ENCODE measurements at regions of chr6 and their contacts with region 1.

Region 1: GRCh38 chr6:138588805-138589434 is 89.6 kb upstream of the NHSL1 start:
- DNase-seq: peak; percentile 83
- ATAC-seq: peak; percentile 67
- H3K4me3 ChIP-seq: no peak overlapping the region
- H3K27ac ChIP-seq: no peak overlapping the region
- H3K4me1 ChIP-seq: peaks cover 2% of the 10 kb centered on the region
- H3K27me3 ChIP-seq: no peaks in the 10 kb centered on the region
- CTCF ChIP-seq: peak; percentile 92
- POLR2A ChIP-seq: 0 out of 2 replicates have a peak, but pooled peaks have one; percentile 35
- RAD21 ChIP-seq: peak; percentile 90

Region 2: GRCh38 chr6:138428944-138429598 is 159.8 kb before region 1 on chr6:
- CTCF ChIA-PET with region 1: interaction called, 6 read pairs
- POLR2A ChIA-PET with region 1: no interaction called
- dilution Hi-C with region 1: no loop called
- in situ Hi-C with region 1: loop called (anchors 5 kb)
- intact Hi-C with region 1: loop called (anchors 1 kb)
- DNase-seq: peak; percentile 77
- ATAC-seq: peak; percentile 76
- H3K4me3 ChIP-seq: no peak overlapping the region
- H3K27ac ChIP-seq: no peak overlapping the region
- H3K4me1 ChIP-seq: peaks cover 5% of the 10 kb centered on the region; the same call in 1 of the 2 replicates
- H3K27me3 ChIP-seq: no peaks in the 10 kb centered on the region
- CTCF ChIP-seq: peak; percentile 80
- POLR2A ChIP-seq: no peak
- RAD21 ChIP-seq: peak; percentile 80

Region 3: DNA sequence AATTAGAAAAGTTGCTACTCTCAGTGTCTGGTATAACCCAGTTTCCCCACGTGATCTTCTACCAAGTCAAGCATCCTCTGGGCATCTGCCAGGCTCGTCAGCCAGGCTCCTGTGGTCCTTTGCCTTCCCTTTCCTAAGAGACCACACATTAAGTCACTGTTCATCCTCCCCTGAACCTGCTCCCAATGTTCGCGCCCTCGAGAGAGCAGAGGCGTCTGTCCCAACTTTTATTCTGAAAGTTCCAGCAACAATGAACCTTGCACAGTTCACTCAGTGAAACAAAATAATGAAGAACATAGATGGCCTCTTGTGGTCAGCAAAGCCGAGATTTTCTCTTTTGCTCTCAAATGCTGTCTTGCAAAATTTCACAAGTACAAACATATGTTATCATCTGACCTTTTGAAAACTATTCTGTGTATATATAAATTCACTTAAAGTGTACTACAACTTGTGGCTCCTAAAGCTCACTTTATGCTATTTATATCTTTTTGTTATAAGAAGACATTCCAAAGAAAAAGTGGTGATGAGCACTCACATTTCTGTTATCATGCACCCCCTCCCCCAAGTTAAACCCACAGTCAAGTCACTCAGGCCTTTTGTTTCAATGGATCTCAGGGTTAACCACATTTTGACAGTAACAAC is 50.4 kb before region 1 on chr6:
- CTCF ChIA-PET with region 1: interaction called, 3 read pairs
- POLR2A ChIA-PET with region 1: no interaction called
- dilution Hi-C with region 1: no loop called
- in situ Hi-C with region 1: no loop called
- intact Hi-C with region 1: loop called (anchors 2 kb)
- DNase-seq: peak; percentile 83
- ATAC-seq: peak; percentile 31
- H3K4me3 ChIP-seq: peak overlapping the region; percentile 10; the same call in 1 of the 2 replicates
- H3K27ac ChIP-seq: peak overlapping the region; percentile 96
- H3K4me1 ChIP-seq: peaks cover 26% of the 10 kb centered on the region
- H3K27me3 ChIP-seq: no peaks in the 10 kb centered on the region
- CTCF ChIP-seq: no peak
- POLR2A ChIP-seq: no peak
- RAD21 ChIP-seq: no peak

Region 4: GRCh38 chr6:138765896-138766655 is 177.2 kb after region 1 on chr6:
- CTCF ChIA-PET with region 1: interaction called, 3 read pairs
- POLR2A ChIA-PET with region 1: interaction called, 3 read pairs
- dilution Hi-C with region 1: no loop called
- in situ Hi-C with region 1: loop called (anchors 5 kb)
- intact Hi-C with region 1: loop called (anchors 1 kb)
- DNase-seq: peak; percentile 56
- ATAC-seq: peak; percentile 56; the same call in 1 of the 2 replicates
- H3K4me3 ChIP-seq: no peak overlapping the region
- H3K27ac ChIP-seq: no peak overlapping the region
- H3K4me1 ChIP-seq: no peaks in the 10 kb centered on the region
- H3K27me3 ChIP-seq: no peaks in the 10 kb centered on the region
- CTCF ChIP-seq: peak; percentile 71
- POLR2A ChIP-seq: no peak
- RAD21 ChIP-seq: peak; percentile 71

Region 5: DNA sequence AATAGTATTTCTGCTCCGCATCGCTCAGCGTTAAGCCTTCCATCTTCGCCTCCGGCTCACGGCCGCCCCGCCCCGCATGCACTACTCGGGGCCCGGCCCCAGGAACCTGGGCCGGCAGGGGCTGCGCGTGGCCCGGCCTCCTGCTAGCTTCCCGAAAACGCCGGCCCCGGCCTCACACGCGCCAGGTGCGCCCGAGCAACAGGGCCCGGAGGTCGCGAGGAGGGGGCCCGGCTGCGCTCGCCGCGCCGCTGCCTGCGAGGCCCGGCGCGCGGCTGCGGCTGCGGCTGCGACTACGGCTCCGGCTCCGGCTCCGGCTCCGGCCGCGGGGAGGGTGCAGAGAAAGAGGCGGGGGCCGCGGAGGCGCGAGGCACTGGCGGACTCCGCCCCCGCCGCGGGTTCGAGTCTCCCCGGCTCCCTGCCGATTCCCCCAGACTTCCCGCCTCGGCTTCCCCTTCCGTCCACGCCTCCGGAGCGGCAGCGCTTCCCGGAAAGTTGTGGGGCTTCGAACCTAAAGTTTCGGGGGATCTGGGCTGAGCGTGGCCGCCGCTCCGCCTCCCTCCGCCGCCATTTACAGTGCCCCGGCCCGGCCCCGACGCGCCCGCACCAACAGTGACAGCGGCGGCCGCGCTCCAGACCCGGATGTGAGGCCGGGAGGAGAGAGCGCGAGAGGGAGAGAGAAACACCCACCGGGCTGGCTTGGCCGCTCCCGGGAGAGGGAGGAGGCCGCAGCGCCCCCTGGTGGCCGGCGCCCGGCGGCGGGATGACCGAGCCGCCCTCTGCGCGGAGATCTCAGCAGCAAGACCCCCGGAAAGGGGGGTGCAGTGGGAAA is 398.9 kb after region 1 on chr6 and contains the start of gene REPS1:
- CTCF ChIA-PET with region 1: no interaction called
- POLR2A ChIA-PET with region 1: no interaction called
- dilution Hi-C with region 1: no loop called
- in situ Hi-C with region 1: no loop called
- intact Hi-C with region 1: loop called (anchors 5 kb)
- DNase-seq: peak; percentile 82
- ATAC-seq: peak; percentile 95
- H3K4me3 ChIP-seq: peak within 1 kb of the TSS; percentile 78
- H3K27ac ChIP-seq: peak within 1 kb of the TSS; percentile 92
- H3K4me1 ChIP-seq: peaks cover 2% of the 10 kb centered on the region; the same call in 1 of the 2 replicates
- H3K27me3 ChIP-seq: no peaks in the 10 kb centered on the region; the same call in 1 of the 2 replicates
- CTCF ChIP-seq: peak; percentile 94
- POLR2A ChIP-seq: peak; percentile 85
- RAD21 ChIP-seq: peak; percentile 79
- total RNA-seq, gene REPS1: 21.1 and 21.9 TPM in 2 replicates

Measured in IMR-90 (cell line).